ENCODE measurements at regions of chr3 and their contacts with region 1.

Region 1: DNA sequence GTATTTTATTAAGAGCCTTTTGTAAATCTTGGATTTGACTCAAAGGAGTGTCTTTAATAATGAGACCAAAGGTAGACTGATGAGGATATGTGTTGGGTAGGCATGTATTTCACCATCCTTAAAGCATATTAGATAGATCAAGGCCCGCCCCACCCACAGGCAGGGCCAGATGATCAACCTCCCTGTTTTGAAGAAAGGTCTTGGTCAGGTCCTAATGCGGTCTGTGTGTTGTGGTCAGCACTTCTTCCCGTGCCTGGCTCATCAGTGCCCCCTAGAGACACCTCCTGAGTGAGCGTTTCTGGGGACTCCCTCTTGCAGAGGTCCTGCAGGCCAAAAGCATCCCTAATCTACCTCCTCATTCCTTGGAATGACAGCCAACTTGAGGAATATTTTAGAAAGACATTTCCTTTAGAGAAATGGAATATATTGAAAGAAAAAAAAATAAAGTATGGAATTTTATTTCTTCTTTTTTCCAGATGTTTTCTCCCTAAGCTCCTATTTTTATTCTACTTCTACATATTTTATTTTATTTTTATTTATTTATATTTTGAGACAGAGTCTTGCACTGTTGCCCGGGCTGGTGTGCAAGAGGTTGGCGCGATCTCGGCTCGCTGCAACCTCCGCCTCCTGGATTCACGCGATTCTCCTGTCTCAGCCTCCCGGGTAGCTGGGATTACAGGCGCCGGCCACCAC is 6.0 kb downstream of the TM4SF4 start:
- DNase-seq: peak; percentile 37
- H3K4me3 ChIP-seq: no peak overlapping the region
- CTCF ChIP-seq: peak; percentile 94

Region 2: GRCh38 chr3:149252272-149252671 is 228.2 kb before region 1 on chr3:
- CTCF ChIA-PET with region 1: no interaction called
- POLR2A ChIA-PET with region 1: no interaction called
- DNase-seq: no peak
- H3K4me3 ChIP-seq: no peak overlapping the region
- CTCF ChIP-seq: no peak

Region 3: DNA sequence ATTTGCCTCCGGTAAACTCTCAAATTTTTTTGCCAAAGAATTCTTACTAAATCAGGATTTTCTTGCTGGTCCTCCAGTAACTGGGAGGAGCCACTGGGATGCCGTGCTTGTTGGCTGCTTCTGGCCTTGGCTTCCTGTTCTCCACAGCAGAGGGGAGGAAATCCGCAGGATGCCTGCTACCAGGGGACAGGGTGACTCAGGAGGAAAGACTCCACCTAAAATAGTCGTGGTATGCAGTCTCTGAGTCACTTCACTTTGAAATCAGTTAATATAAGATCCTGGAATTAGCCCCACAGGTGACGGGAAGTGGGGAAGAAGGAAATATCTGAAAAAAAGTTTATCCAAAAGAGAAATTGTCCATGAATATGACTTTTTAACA is 140.6 kb before region 1 on chr3:
- CTCF ChIA-PET with region 1: interaction called, 10 read pairs
- POLR2A ChIA-PET with region 1: no interaction called
- DNase-seq: peak; percentile 76
- H3K4me3 ChIP-seq: no peak overlapping the region
- CTCF ChIP-seq: no peak

Region 4: GRCh38 chr3:149371001-149371722 is 109.3 kb before region 1 on chr3:
- CTCF ChIA-PET with region 1: interaction called, 11 read pairs
- POLR2A ChIA-PET with region 1: no interaction called
- DNase-seq: no peak
- H3K4me3 ChIP-seq: no peak overlapping the region
- CTCF ChIP-seq: no peak

Region 5: DNA sequence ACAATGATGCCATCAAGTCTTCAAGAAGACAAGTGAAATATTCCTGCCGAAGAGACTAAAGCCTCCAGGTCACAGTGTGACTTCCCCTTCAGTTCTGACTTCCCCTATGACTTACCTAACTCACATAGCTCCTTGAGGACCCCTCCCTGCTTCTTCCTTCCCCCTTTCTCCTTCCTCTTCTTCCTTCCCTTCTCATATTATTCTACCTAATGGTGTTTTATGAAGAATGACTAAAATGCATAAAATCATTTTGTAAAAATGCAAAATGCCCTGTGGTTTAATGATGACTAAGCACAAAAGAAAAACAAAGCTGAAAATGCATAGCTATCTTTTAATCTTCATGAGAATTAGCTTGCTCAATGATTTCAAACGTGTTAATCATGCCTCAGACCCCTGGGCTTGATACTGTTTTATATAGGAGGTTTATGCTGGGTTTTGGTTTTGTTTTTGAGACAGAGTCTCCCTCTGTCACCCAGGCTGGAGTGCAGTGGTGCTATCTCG is 32.1 kb before region 1 on chr3:
- CTCF ChIA-PET with region 1: interaction called, 14 read pairs
- POLR2A ChIA-PET with region 1: no interaction called
- DNase-seq: peak; percentile 66
- H3K4me3 ChIP-seq: no peak overlapping the region
- CTCF ChIP-seq: no peak

Region 6: DNA sequence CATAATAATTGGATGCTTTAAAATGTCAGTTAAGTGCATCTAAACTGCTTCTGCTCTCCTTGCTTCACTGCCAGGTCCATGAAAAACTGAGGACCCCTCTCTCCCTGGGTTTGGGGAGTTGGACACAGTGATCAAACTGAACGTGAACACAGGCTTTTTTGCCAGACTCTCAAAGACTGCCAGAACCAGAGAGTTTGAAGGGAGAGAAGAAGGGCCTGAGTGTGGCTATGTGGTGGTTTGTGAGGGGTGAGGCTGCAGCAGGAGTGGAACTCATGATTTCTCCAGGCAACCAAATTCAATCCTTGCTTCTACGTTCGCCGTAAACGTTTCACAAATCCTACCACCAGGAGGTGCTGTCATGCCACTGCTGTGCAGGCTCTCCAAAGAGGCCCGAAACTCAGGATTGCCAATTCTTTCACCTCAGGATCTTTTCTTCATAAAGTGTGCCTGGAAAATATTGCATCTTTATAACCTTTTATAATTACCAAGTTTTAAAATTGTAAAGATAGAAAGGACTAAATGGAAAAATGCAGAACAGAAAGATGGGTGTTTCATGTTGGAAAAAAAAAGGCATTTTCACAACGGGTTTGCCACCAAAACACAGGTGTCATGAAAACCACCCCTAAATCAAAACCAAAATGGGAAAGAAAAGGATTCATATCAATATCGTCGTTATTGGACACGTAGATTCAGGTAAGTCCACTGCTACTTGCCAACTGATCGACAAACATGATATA is 13.7 kb after region 1 on chr3:
- CTCF ChIA-PET with region 1: interaction called, 47 read pairs
- POLR2A ChIA-PET with region 1: no interaction called
- DNase-seq: no peak
- H3K4me3 ChIP-seq: no peak overlapping the region
- CTCF ChIP-seq: peak; percentile 83